ENCODE measurements at regions of chr4 and their contacts with region 1.

Region 1: GRCh38 chr4:105471566-105472176 is 2.2 kb downstream of the PPA2 start:
- DNase-seq: peak in 2 of 3 donors; percentile 38 to 88
- ATAC-seq: peak; percentile 50
- H3K4me3 ChIP-seq: no peak overlapping the region
- H3K4me1 ChIP-seq: peaks cover 3% of the 10 kb centered on the region
- CTCF ChIP-seq: peak; percentile 29

Region 2: GRCh38 chr4:104756837-104757236 is 714.8 kb before region 1 on chr4:
- intact Hi-C with region 1: no loop called
- DNase-seq: no peak
- ATAC-seq: no peak
- H3K4me3 ChIP-seq: no peak overlapping the region
- H3K4me1 ChIP-seq: no peaks in the 10 kb centered on the region
- CTCF ChIP-seq: no peak

Region 3: GRCh38 chr4:105140684-105141490 is 330.8 kb before region 1 on chr4:
- intact Hi-C with region 1: loop called (anchors 2 to 5 kb)
- DNase-seq: peak in 1 of 3 donors; percentile 69
- ATAC-seq: peak; percentile 62
- H3K4me3 ChIP-seq: no peak overlapping the region
- H3K4me1 ChIP-seq: no peaks in the 10 kb centered on the region
- CTCF ChIP-seq: peak; percentile 21

Region 4: DNA sequence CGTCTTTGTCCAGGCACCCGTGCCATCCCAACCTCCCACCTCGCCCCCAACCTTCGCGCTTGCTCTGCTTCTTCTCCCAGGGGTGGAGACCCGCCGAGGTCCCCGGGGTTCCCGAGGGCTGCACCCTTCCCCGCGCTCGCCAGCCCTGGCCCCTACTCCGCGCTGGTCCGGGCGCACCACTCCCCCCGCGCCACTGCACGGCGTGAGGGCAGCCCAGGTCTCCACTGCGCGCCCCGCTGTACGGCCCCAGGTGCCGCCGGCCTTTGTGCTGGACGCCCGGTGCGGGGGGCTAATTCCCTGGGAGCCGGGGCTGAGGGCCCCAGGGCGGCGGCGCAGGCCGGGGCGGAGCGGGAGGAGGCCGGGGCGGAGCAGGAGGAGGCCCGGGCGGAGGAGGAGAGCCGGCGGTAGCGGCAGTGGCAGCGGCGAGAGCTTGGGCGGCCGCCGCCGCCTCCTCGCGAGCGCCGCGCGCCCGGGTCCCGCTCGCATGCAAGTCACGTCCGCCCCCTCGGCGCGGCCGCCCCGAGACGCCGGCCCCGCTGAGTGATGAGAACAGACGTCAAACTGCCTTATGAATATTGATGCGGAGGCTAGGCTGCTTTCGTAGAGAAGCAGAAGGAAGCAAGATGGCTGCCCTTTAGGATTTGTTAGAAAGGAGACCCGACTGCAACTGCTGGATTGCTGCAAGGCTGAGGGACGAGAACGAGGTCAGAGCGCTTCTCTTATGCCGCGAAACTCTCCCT is 325.2 kb before region 1 on chr4 and contains the start of gene TET2:
- intact Hi-C with region 1: loop called (anchors 2 to 5 kb)
- DNase-seq: peak; percentile 85 to 86 (median 85)
- ATAC-seq: peak; percentile 87
- H3K4me3 ChIP-seq: peak within 1 kb of the TSS; percentile 33
- H3K4me1 ChIP-seq: peaks cover 14% of the 10 kb centered on the region
- CTCF ChIP-seq: no peak
- total RNA-seq, gene TET2: 29.0 to 36.3 (median 31.0) TPM

Region 5: DNA sequence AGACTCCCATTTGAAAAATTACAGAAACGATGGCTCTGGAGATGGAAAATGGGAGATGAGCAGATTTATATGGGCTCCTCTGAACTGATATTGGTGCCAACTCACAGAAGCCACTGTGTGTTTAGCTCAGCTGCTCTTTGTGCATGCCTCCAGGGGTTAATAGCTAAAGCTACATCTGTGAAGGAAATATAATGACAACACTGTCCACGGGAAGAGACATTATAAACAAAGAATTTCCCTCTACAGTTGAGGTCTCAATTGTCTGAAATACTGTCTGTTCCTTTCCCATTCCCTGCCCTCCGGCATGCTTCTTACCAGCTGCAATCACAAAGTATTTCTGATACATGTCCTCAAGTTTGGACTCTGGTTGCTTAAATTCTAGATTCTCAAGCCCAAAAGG is 38.2 kb before region 1 on chr4:
- intact Hi-C with region 1: no loop called
- DNase-seq: no peak
- ATAC-seq: no peak
- H3K4me3 ChIP-seq: no peak overlapping the region
- H3K4me1 ChIP-seq: no peaks in the 10 kb centered on the region
- CTCF ChIP-seq: no peak

Measured in mucosa of descending colon (tissue), 3 donors.